ENCODE measurements at regions of chr1 and their contacts with region 1.

Region 1: GRCh38 chr1:205273551-205273982 is 45.8 kb downstream of the TMCC2 start:
- DNase-seq: peak; percentile 90
- H3K4me3 ChIP-seq: no peak overlapping the region
- H3K27ac ChIP-seq: no peak overlapping the region
- H3K4me1 ChIP-seq: peaks cover 8% of the 10 kb centered on the region
- H3K27me3 ChIP-seq: no peaks in the 10 kb centered on the region
- CTCF ChIP-seq: peak; percentile 100

Region 2: GRCh38 chr1:205324781-205325180 is 51.2 kb after region 1 on chr1:
- intact Hi-C with region 1: loop called (anchors 1 kb)
- DNase-seq: no peak
- H3K4me3 ChIP-seq: no peak overlapping the region
- H3K27ac ChIP-seq: no peak overlapping the region
- H3K4me1 ChIP-seq: no peaks in the 10 kb centered on the region
- H3K27me3 ChIP-seq: no peaks in the 10 kb centered on the region
- CTCF ChIP-seq: no peak

Measured in colonic mucosa (tissue), 4 donors.